Heart right ventricle (tissue), 16 donors: ENCODE measurements at regions of chr3 and their contacts with region 1.

Region 1: DNA sequence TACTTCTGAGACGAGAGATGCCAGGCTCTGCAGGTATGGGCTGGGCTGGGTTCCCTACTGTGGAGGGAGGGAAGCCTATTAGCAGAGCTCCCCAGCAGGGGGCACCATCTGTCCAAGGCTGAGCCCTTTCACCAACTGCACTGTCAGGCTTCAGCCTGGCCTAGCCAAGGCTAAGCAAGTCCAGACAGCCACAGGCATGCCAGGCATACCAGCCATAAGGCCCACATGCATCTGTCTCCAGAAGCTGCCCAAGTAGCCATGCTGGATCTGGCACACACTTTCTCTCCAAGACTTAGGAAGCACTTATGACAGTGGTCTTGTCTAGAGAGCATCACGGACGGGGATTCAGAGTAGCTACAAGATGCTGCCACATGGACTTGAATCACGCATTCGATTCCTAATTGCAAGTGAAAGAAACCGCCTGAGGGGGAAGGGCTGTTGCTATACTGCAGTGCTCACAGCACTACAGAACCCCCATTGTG is 28.3 kb downstream of the RUVBL1 start:
- DNase-seq: peak; percentile 80 to 82
- ATAC-seq: peak; percentile 91 to 98 (median 96)
- H3K4me3 ChIP-seq: no peak overlapping the region
- H3K27ac ChIP-seq: peak overlapping the region in 2 of 10 donors; percentile 9 to 45
- H3K4me1 ChIP-seq: peaks cover 0 to 18% (median 5%) of the 10 kb centered on the region in 9 donors
- H3K27me3 ChIP-seq: no peaks in the 10 kb centered on the region
- CTCF ChIP-seq: peak; percentile 61 to 89 (median 82)

Region 2: GRCh38 chr3:128133273-128134084 is 38.2 kb after region 1 on chr3:
- intact Hi-C with region 1: loop called in 9 of 10 experiments (anchors 1 to 5 kb)
- DNase-seq: no peak
- ATAC-seq: peak in 7 of 8 donors; percentile 53 to 76 (median 63)
- H3K4me3 ChIP-seq: no peak overlapping the region
- H3K27ac ChIP-seq: no peak overlapping the region
- H3K4me1 ChIP-seq: no peaks in the 10 kb centered on the region
- H3K27me3 ChIP-seq: peaks cover 0 to 14% (median 0%) of the 10 kb centered on the region in 7 donors
- CTCF ChIP-seq: peak; percentile 19 to 69 (median 61)

Region 3: DNA sequence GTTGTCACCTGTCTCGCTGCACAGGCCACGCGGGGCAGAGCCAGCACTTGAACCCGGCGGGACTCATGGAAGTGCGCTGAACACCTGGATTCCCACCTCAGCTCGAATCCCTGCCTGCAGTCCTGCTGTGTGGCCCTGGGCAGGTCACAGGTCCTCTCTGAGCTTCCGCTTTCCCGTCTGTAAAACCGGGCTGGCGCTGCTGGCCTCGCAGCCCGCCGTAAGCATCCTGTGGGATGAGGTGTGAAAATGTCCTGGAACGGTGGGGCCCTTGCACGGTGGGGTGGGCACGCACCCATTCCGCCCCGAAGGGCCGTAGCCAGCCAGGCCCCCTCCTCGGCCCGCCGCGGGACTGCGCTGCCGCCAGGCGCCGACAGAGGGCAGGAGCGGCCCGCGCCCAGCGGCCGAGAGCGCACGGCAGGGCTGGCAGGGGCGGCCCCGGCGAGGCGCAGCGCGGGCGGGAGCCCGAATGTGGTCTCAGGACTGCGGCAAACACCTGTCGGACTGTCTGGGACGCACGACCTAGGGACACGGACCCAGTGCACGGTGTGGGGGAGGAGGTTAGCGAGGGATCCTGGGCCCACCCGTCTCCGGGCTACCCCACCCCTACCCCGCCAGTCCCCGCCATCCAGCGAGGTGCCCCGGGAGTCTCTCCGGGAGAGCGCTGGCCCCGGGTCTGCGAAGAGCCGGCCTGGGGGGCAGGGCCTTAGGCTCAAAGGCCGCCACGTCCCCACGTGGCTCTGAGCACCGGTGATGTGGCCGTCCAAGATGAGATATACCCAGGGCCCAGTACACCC is 331.1 kb after region 1 on chr3:
- intact Hi-C with region 1: loop called in 1 of 10 experiments (anchors 10 kb)
- DNase-seq: peak in 1 of 2 donors; percentile 56
- ATAC-seq: peak; percentile 76 to 93 (median 86)
- H3K4me3 ChIP-seq: peak overlapping the region in 9 of 10 donors; percentile 8 to 46 (median 35)
- H3K27ac ChIP-seq: no peak overlapping the region
- H3K4me1 ChIP-seq: peaks cover 0 to 16% (median 7%) of the 10 kb centered on the region in 9 donors
- H3K27me3 ChIP-seq: peaks cover 0 to 32% (median 19%) of the 10 kb centered on the region in 7 donors
- CTCF ChIP-seq: peak; percentile 69 to 98 (median 88)

Region 4: GRCh38 chr3:128503164-128503651 is 407.9 kb after region 1 on chr3:
- intact Hi-C with region 1: loop called in 9 of 10 experiments (anchors 5 to 10 kb)
- DNase-seq: no peak
- ATAC-seq: peak in 2 of 8 donors; percentile 18 to 35
- H3K4me3 ChIP-seq: no peak overlapping the region
- H3K27ac ChIP-seq: no peak overlapping the region
- H3K4me1 ChIP-seq: peaks cover 0 to 5% (median 1%) of the 10 kb centered on the region in 9 donors
- H3K27me3 ChIP-seq: peaks cover 3 to 49% (median 22%) of the 10 kb centered on the region in 7 donors
- CTCF ChIP-seq: peak in 7 of 9 donors; percentile 17 to 39 (median 25)

Region 5: GRCh38 chr3:128603811-128604775 is 508.8 kb after region 1 on chr3:
- intact Hi-C with region 1: loop called in 7 of 10 experiments (anchors 2 to 10 kb)
- DNase-seq: no peak
- ATAC-seq: no peak
- H3K4me3 ChIP-seq: no peak overlapping the region
- H3K27ac ChIP-seq: no peak overlapping the region
- H3K4me1 ChIP-seq: peaks cover 0 to 30% (median 11%) of the 10 kb centered on the region in 9 donors
- H3K27me3 ChIP-seq: no peaks in the 10 kb centered on the region
- CTCF ChIP-seq: no peak